ENCODE measurements at regions of chr6 and their contacts with region 1.

Region 1: GRCh38 chr6:109187399-109188114 is 92.2 kb downstream of the CEP57L1 start:
- DNase-seq: peak; percentile 75
- ATAC-seq: peak; percentile 86
- H3K4me3 Mint-ChIP-seq: no peak overlapping the region
- H3K27ac Mint-ChIP-seq: no peak overlapping the region
- H3K4me1 Mint-ChIP-seq: no peaks in the 10 kb centered on the region
- H3K27me3 Mint-ChIP-seq: peaks cover 3% of the 10 kb centered on the region
- CTCF ChIP-seq: peak; percentile 86

Region 2: GRCh38 chr6:108655806-108656651 is 531.5 kb before region 1 on chr6:
- CTCF ChIA-PET with region 1: no interaction called
- POLR2A ChIA-PET with region 1: no interaction called
- intact Hi-C with region 1: no loop called
- DNase-seq: no peak
- ATAC-seq: no peak
- H3K4me3 Mint-ChIP-seq: no peak overlapping the region
- H3K27ac Mint-ChIP-seq: no peak overlapping the region
- H3K4me1 Mint-ChIP-seq: peaks cover 23% of the 10 kb centered on the region
- H3K27me3 Mint-ChIP-seq: no peaks in the 10 kb centered on the region
- CTCF ChIP-seq: no peak

Region 3: DNA sequence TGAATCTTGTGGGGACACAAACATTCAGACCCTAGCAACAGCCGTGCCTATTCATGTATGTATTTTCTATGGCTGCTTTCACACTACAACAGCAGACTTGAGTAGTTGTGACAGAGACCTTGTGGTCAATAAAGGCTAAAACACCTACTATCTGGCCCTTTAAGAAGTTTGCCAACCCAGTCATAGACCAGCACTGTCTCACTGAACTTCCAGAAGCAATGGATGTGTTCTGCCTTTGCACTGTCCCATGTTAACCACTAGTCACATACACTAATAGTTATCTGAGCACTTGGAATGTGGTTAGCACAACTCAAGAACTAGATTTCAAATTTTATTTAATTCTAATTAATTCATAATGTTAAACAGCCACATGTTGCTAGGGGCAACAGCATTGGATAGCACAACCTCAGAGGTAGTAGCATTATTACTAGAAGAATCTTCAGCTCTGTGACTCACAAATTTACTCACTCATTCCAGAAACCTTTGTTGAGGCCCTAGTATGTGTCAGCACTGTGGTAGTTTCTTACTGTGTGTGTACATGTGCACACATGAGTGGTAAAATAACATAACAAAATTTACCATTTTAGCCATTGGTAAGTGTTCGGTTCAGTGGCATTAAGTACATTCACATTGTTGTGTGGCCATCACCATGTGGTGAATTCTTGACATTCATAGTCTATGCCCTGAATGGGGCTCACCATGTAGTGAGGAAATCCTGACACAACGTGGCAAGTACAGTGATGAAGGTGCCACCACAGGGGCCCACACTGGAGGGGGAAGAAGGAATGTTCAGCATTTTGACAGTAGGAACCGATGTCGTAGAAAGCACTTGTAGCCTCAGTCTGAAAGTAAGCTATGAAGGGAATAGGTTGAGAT is 15.1 kb after region 1 on chr6:
- CTCF ChIA-PET with region 1: interaction called, 22 read pairs
- POLR2A ChIA-PET with region 1: no interaction called
- intact Hi-C with region 1: no loop called
- DNase-seq: peak; percentile 47
- ATAC-seq: peak; percentile 88
- H3K4me3 Mint-ChIP-seq: no peak overlapping the region
- H3K27ac Mint-ChIP-seq: no peak overlapping the region
- H3K4me1 Mint-ChIP-seq: peaks cover 8% of the 10 kb centered on the region
- H3K27me3 Mint-ChIP-seq: peaks cover 2% of the 10 kb centered on the region
- CTCF ChIP-seq: no peak

Region 4: DNA sequence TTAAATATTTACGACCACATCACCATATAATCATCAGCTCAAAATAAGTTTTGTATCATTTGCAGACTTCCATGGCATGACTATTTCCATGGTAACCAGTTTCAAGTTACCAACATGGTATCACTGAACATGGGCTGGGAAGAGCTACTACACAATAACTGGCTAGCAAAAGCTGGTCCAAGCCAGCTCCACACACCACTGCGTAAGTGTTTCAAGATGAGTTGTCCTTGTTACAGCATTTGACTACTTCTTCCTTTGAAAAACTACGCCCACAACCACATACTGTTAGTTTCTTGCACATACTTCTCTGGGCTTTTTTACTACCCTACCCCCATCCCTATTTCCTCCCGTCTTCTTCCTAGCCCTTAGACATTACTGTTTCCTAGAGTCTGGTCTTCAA is 186.2 kb after region 1 on chr6:
- CTCF ChIA-PET with region 1: interaction called, 12 read pairs
- POLR2A ChIA-PET with region 1: no interaction called
- intact Hi-C with region 1: no loop called
- DNase-seq: peak; percentile 75
- ATAC-seq: peak; percentile 92
- H3K4me3 Mint-ChIP-seq: peak overlapping the region; percentile 24
- H3K27ac Mint-ChIP-seq: peak overlapping the region; percentile 86
- H3K4me1 Mint-ChIP-seq: peaks cover 69% of the 10 kb centered on the region
- H3K27me3 Mint-ChIP-seq: no peaks in the 10 kb centered on the region
- CTCF ChIP-seq: no peak

Region 5: DNA sequence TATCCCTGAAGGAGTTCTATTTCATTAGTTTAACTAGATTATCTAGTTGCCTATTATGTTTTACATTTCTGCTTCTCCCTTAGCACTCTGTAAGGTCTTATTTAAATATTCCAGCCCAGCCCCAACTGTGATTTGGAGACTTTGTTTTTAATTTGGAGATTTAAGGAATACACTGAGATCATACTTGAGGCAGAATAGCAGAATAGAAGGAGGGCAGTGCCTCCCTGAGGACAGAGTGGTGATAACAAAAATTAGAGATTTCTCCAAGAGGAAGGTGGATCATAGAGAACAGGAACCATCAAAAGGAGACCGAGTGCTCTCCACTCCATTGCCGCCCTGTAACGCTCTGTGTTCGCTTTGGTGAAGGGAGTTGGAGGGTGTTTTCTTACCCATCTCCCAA is 209.5 kb after region 1 on chr6:
- CTCF ChIA-PET with region 1: interaction called, 13 read pairs
- POLR2A ChIA-PET with region 1: no interaction called
- intact Hi-C with region 1: no loop called
- DNase-seq: no peak
- ATAC-seq: no peak
- H3K4me3 Mint-ChIP-seq: no peak overlapping the region
- H3K27ac Mint-ChIP-seq: no peak overlapping the region
- H3K4me1 Mint-ChIP-seq: peaks cover 4% of the 10 kb centered on the region
- H3K27me3 Mint-ChIP-seq: no peaks in the 10 kb centered on the region
- CTCF ChIP-seq: peak; percentile 15

Region 6: DNA sequence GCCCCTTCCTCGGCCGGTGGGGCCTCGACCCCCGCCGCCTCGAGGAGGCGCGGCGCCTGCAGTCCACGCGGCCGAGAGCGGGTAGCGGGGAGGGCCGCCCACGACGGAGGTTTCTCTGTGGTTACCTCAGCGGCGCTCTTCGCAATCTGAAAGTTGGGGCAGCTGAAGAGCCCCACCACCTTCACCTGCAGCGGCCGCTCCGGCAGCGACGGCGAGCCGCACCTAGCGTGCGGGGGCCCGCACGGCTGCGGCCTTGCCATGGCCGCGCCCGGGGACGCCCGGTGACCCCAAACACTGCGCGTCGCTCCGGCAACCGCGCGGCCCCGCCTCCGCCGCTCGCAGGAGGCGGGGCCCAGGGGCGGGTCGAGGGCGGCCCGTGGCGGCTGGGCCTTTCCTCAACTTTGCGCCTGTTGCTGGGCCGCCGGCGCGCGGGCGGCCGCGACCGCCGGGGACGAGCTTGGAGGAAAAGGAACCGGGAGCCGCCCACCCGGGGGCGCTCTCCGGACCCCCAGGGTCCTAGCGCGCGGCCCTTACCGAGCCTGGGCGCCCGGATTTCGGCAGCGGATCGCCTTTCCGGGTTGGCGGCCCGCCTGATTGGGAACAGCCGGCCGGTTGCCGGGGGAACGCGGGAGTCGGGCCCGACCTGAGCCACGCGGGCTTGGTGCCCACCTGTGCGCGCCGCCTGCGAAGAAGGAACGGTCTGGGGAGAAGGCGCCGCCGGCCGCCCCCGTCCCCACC is 252.9 kb after region 1 on chr6 and contains the starts of genes PPIL6 and SMPD2:
- CTCF ChIA-PET with region 1: interaction called, 10 read pairs
- POLR2A ChIA-PET with region 1: no interaction called
- intact Hi-C with region 1: no loop called
- DNase-seq: peak; percentile 80
- ATAC-seq: peak; percentile 91
- H3K4me3 Mint-ChIP-seq: peak within 1 kb of the TSS; percentile 92
- H3K27ac Mint-ChIP-seq: peak within 1 kb of the TSS; percentile 89
- H3K4me1 Mint-ChIP-seq: peaks cover 26% of the 10 kb centered on the region
- H3K27me3 Mint-ChIP-seq: no peaks in the 10 kb centered on the region
- CTCF ChIP-seq: no peak
- total RNA-seq, gene PPIL6: 0.27 to 0.38 TPM
- total RNA-seq, gene SMPD2: 8.7 to 9.6 TPM